ENCODE measurements at regions of chr5 and their contacts with region 1.

Region 1: DNA sequence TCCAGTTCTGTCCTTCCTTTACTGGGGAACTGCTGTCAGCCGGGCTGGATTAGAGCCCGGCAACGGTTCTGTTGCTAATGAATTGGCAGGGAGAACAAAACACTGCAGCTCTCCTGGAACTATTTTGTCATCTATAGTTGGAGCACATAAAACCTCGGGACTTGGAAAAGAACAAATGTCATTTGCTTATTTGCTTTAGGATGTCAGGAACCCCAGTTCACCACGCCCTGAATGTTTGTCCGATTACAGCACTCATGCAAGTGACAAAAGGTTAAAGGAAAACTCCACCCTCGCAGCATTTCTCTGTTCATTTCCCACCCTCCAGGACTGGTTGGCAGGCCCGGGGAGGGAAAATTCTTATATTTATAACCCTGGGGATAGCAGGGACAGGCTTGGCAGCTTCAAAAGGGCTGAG is 66.4 kb upstream of the PLPP1 start:
- DNase-seq: peak; percentile 74 to 90
- ATAC-seq: peak; percentile 71 to 91 (median 85)
- H3K4me3 ChIP-seq: peak overlapping the region in 6 of 10 donors; percentile 18 to 46 (median 41)
- H3K27ac ChIP-seq: peak overlapping the region; percentile 86 to 98 (median 94)
- H3K4me1 ChIP-seq: peaks cover 21 to 86% (median 78%) of the 10 kb centered on the region in 9 donors
- H3K27me3 ChIP-seq: no peaks in the 10 kb centered on the region
- CTCF ChIP-seq: no peak

Region 2: GRCh38 chr5:55421074-55421529 is 180.1 kb before region 1 on chr5:
- intact Hi-C with region 1: loop called in 1 of 10 experiments (anchors 10 kb)
- DNase-seq: no peak
- ATAC-seq: no peak
- H3K4me3 ChIP-seq: no peak overlapping the region
- H3K27ac ChIP-seq: peak overlapping the region in 3 of 10 donors; percentile 8 to 51 (median 36)
- H3K4me1 ChIP-seq: peaks cover 3 to 52% (median 29%) of the 10 kb centered on the region in 9 donors
- H3K27me3 ChIP-seq: no peaks in the 10 kb centered on the region
- CTCF ChIP-seq: no peak

Region 3: GRCh38 chr5:55534436-55535198 is 66.6 kb before region 1 on chr5 and contains the start of gene PLPP1:
- intact Hi-C with region 1: loop called in 7 of 10 experiments (anchors 1 to 10 kb)
- DNase-seq: peak; percentile 92 to 93
- ATAC-seq: peak; percentile 94 to 97 (median 96)
- H3K4me3 ChIP-seq: peak within 1 kb of the TSS; percentile 58 to 95 (median 88)
- H3K27ac ChIP-seq: peak within 1 kb of the TSS; percentile 78 to 99 (median 96)
- H3K4me1 ChIP-seq: peaks cover 0 to 62% (median 36%) of the 10 kb centered on the region in 9 donors
- H3K27me3 ChIP-seq: peaks cover 0 to 8% (median 0%) of the 10 kb centered on the region in 7 donors
- CTCF ChIP-seq: peak in 2 of 9 donors; percentile 21 to 25
- total RNA-seq, gene PLPP1: 58.7 to 111 (median 75.4) TPM

Region 4: GRCh38 chr5:55636683-55637082 is 35.5 kb after region 1 on chr5:
- intact Hi-C with region 1: loop called in 4 of 10 experiments (anchors 2 to 5 kb)
- DNase-seq: peak in 1 of 2 donors; percentile 54
- ATAC-seq: peak in 7 of 8 donors; percentile 36 to 80 (median 56)
- H3K4me3 ChIP-seq: no peak overlapping the region
- H3K27ac ChIP-seq: peak overlapping the region; percentile 11 to 91 (median 80)
- H3K4me1 ChIP-seq: peaks cover 3 to 53% (median 45%) of the 10 kb centered on the region in 9 donors
- H3K27me3 ChIP-seq: no peaks in the 10 kb centered on the region
- CTCF ChIP-seq: no peak

Region 5: DNA sequence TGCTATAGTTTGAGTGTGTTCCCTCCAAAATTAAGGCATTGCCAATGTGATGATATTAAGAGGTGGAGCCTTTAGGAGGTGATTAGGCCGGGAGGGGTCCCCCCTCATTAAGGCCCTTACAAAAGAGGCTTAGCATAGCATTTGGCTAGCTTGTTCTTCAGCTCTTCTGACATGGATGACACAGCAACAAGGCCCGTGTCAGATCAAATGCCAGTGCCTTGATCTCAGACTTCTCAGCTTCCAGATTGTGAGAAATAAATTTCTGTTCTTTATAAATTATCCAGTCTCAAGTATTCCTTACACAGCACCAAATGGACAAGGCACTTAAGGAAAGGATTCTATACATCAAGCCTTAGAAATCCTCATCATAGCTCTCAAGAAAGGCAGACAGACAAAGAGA is 79.1 kb after region 1 on chr5:
- intact Hi-C with region 1: loop called in 4 of 10 experiments (anchors 5 to 10 kb)
- DNase-seq: no peak
- ATAC-seq: peak in 3 of 8 donors; percentile 37 to 56 (median 53)
- H3K4me3 ChIP-seq: no peak overlapping the region
- H3K27ac ChIP-seq: peak overlapping the region in 2 of 10 donors; percentile 24 to 49
- H3K4me1 ChIP-seq: peaks cover 0 to 37% (median 23%) of the 10 kb centered on the region in 9 donors
- H3K27me3 ChIP-seq: no peaks in the 10 kb centered on the region
- CTCF ChIP-seq: no peak

Measured in heart right ventricle (tissue), 16 donors.